CD4-positive, alpha-beta memory T cell (primary cell): ENCODE measurements at regions of chr1 and their contacts with region 1.

Region 1: GRCh38 chr1:1013105-1013921 is at the start of gene ISG15:
- DNase-seq: peak; percentile 82 to 94 (median 88)
- H3K4me3 ChIP-seq: peak within 1 kb of the TSS; percentile 54 to 88
- H3K4me3 Mint-ChIP-seq: peak within 1 kb of the TSS; percentile 96 to 100 (median 98)
- H3K27ac ChIP-seq: peak within 1 kb of the TSS; percentile 88
- H3K27ac Mint-ChIP-seq: peak within 1 kb of the TSS; percentile 90 to 99 (median 98)
- H3K4me1 ChIP-seq: peaks cover 16% of the 10 kb centered on the region
- H3K4me1 Mint-ChIP-seq: peaks cover 14 to 33% (median 25%) of the 10 kb centered on the region in 4 donors
- H3K27me3 ChIP-seq: no peaks in the 10 kb centered on the region
- H3K27me3 Mint-ChIP-seq: peaks cover under 1 to 11% of the 10 kb centered on the region in 2 donors
- total RNA-seq, gene ISG15: 31.6 to 33.2 TPM

Region 2: DNA sequence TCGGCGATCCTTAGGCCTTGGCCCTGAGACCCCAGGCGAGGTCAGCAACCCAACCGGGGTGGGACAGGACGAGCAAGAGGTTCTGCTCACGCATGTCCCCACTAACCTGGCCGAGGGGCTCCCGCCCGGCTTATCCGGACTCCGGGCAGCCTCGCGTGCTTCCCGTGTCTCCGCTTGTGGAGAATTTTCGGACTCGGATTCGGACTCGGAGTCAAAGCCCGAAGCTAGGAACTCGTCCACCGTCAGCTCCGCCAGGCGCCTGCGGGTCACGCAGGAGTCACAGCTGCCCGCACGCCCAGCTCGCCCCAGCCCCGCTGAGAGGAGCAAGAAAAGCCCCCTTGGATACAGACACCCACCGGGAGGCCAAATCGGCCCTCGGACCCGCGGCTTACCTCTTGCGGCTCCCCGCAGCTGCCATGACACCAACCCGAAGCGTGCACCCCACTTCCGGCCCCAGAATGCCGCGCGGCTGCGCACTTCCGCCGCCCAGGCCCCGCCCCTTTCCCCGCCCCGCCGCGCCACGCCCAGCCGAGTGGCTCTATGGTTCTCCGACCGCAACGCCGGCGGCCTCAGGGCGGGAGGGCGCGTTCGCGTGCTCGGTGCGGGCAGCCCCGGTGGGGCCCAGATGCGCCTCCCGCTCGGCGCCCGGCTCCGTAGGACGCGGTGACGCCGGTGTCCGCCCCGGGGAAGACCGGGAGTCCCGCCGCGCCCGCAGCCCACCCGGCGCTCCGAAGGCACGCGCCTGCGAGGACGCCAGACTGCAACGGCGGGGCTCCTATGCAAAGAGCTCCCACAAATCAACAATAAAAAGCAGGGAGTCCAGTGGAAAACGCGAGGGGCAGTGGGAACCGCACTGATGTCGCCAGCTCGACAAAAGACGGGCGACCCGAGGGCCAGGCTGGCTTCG is 54.2 kb before region 1 on chr1 and contains the start of gene NOC2L:
- CTCF ChIA-PET with region 1: no interaction called
- POLR2A ChIA-PET with region 1: interaction called, 9 read pairs
- intact Hi-C with region 1: loop called (anchors 2 kb)
- DNase-seq: peak; percentile 90 to 93 (median 92)
- H3K4me3 ChIP-seq: peak within 1 kb of the TSS; percentile 83 to 99
- H3K4me3 Mint-ChIP-seq: peak within 1 kb of the TSS; percentile 89 to 96 (median 91)
- H3K27ac ChIP-seq: peak within 1 kb of the TSS; percentile 65
- H3K27ac Mint-ChIP-seq: peak within 1 kb of the TSS; percentile 75 to 93 (median 86)
- H3K4me1 ChIP-seq: peaks cover 23% of the 10 kb centered on the region
- H3K4me1 Mint-ChIP-seq: peaks cover 7 to 34% (median 18%) of the 10 kb centered on the region in 4 donors
- H3K27me3 ChIP-seq: no peaks in the 10 kb centered on the region
- H3K27me3 Mint-ChIP-seq: no peaks in the 10 kb centered on the region
- total RNA-seq, gene NOC2L: 63.6 to 69.5 TPM

Region 3: GRCh38 chr1:966611-967300 is 46.6 kb before region 1 on chr1:
- CTCF ChIA-PET with region 1: no interaction called
- POLR2A ChIA-PET with region 1: interaction called, 11 read pairs
- intact Hi-C with region 1: no loop called
- DNase-seq: peak; percentile 53 to 79 (median 61)
- H3K4me3 ChIP-seq: peak overlapping the region; percentile 47 to 67
- H3K4me3 Mint-ChIP-seq: peak overlapping the region; percentile 76 to 91 (median 81)
- H3K27ac ChIP-seq: peak overlapping the region; percentile 67
- H3K27ac Mint-ChIP-seq: peak overlapping the region in 3 of 7 donors; percentile 41 to 53 (median 52)
- H3K4me1 ChIP-seq: peaks cover 18% of the 10 kb centered on the region
- H3K4me1 Mint-ChIP-seq: peaks cover 0 to 14% (median 3%) of the 10 kb centered on the region in 4 donors
- H3K27me3 ChIP-seq: no peaks in the 10 kb centered on the region
- H3K27me3 Mint-ChIP-seq: peaks cover 1 to 2% of the 10 kb centered on the region in 2 donors

Region 4: GRCh38 chr1:999725-1000356 is 13.5 kb before region 1 on chr1 and contains the start of gene HES4:
- CTCF ChIA-PET with region 1: interaction called, 35 read pairs
- POLR2A ChIA-PET with region 1: interaction called, 16 read pairs
- intact Hi-C with region 1: loop called (anchors 1 kb)
- DNase-seq: peak; percentile 51 to 61 (median 58)
- H3K4me3 ChIP-seq: peak within 1 kb of the TSS; percentile 3 to 44
- H3K4me3 Mint-ChIP-seq: peak within 1 kb of the TSS; percentile 64 to 91 (median 76)
- H3K27ac ChIP-seq: no peak within 1 kb of the TSS
- H3K27ac Mint-ChIP-seq: peak within 1 kb of the TSS; percentile 85 to 94 (median 89)
- H3K4me1 ChIP-seq: peaks cover 29% of the 10 kb centered on the region
- H3K4me1 Mint-ChIP-seq: peaks cover 7 to 24% (median 9%) of the 10 kb centered on the region in 4 donors
- H3K27me3 ChIP-seq: peaks cover 39% of the 10 kb centered on the region
- H3K27me3 Mint-ChIP-seq: peaks cover 21 to 29% of the 10 kb centered on the region in 2 donors
- total RNA-seq, gene HES4: not detected

Region 5: DNA sequence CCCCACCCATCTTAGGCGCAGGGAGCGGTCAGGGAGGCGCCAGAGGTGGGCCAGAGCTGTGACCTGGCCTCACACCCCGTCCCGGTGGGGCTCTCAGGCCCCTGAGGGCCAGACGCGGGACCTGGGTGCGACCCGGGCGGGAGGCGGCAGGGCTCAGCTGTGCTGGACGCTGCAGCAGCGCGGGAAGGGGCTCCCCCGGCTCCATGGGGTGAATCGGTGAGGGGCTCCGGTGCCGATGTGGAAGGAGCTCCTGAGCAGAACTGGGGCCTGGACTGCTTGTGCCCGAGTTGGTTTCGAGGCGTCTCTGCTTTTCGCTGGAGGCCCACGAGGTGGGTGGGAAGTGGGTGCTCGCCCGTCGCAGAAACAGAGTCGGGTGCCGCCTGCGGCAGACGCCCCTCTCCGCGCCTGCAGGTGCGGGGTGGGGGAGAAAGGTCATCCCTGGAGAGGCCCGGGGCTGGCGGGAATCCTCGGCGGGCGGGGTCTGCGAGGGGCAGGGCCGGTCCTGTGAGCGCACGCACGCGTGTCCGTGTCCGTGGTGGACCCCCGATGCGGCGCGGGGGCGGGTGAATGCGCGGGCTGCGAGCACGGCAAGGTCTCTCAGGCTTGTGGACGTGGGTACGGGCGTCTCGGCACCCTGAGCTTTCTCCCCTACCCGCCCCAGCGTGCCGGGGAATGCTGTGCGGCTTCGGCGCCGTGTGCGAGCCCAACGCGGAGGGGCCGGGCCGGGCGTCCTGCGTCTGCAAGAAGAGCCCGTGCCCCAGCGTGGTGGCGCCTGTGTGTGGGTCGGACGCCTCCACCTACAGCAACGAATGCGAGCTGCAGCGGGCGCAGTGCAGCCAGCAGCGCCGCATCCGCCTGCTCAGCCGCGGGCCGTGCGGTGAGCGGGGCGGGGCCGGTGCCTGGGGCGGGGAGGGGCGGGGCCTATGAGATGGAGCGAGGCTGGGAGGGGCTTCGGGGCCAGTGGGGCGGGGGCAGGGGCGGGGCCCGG is 27.0 kb after region 1 on chr1:
- CTCF ChIA-PET with region 1: interaction called, 3 read pairs
- POLR2A ChIA-PET with region 1: interaction called, 10 read pairs
- intact Hi-C with region 1: no loop called
- DNase-seq: peak; percentile 76 to 86 (median 80)
- H3K4me3 ChIP-seq: peak overlapping the region in 1 of 2 donors; percentile 70
- H3K4me3 Mint-ChIP-seq: peak overlapping the region; percentile 59 to 83 (median 67)
- H3K27ac ChIP-seq: no peak overlapping the region
- H3K27ac Mint-ChIP-seq: peak overlapping the region in 2 of 7 donors; percentile 58 to 69
- H3K4me1 ChIP-seq: peaks cover 17% of the 10 kb centered on the region
- H3K4me1 Mint-ChIP-seq: peaks cover 5 to 17% (median 11%) of the 10 kb centered on the region in 4 donors
- H3K27me3 ChIP-seq: peaks cover 7% of the 10 kb centered on the region
- H3K27me3 Mint-ChIP-seq: peaks cover 10 to 12% of the 10 kb centered on the region in 2 donors